HEK293 (cell line): ENCODE measurements at regions of chr6 and their contacts with region 1.

Region 1: GRCh38 chr6:55276745-55277530 is 50.3 kb upstream of the GFRAL start:
- H3K4me3 ChIP-seq: no peak overlapping the region
- H3K27ac ChIP-seq: no peak overlapping the region
- H3K4me1 ChIP-seq: no peaks in the 10 kb centered on the region
- CTCF ChIP-seq: peak; percentile 37; the same call in 1 of the 2 replicates

Region 2: GRCh38 chr6:55266896-55267295 is 10.0 kb before region 1 on chr6:
- CTCF ChIA-PET with region 1: interaction called, 13 read pairs
- POLR2A ChIA-PET with region 1: no interaction called
- H3K4me3 ChIP-seq: no peak overlapping the region
- H3K27ac ChIP-seq: no peak overlapping the region
- H3K4me1 ChIP-seq: no peaks in the 10 kb centered on the region
- CTCF ChIP-seq: no peak

Region 3: GRCh38 chr6:55886185-55886836 is 609.4 kb after region 1 on chr6:
- CTCF ChIA-PET with region 1: interaction called, 17 read pairs
- POLR2A ChIA-PET with region 1: interaction called, 3 read pairs
- H3K4me3 ChIP-seq: no peak overlapping the region
- H3K27ac ChIP-seq: no peak overlapping the region
- H3K4me1 ChIP-seq: peaks cover 13% of the 10 kb centered on the region
- CTCF ChIP-seq: no peak